ENCODE measurements at regions of chr14 and their contacts with region 1.

Region 1: GRCh38 chr14:73472185-73473114 is 14.1 kb upstream of the NUMB start:
- DNase-seq: peak in 2 of 4 donors; percentile 54 to 71
- ATAC-seq: peak; percentile 90
- H3K4me3 ChIP-seq: no peak overlapping the region
- H3K27ac ChIP-seq: no peak overlapping the region
- H3K4me1 ChIP-seq: peaks cover 1 to 26% of the 10 kb centered on the region in 2 donors
- H3K27me3 ChIP-seq: no peaks in the 10 kb centered on the region
- CTCF ChIP-seq: peak; percentile 44 to 75

Region 2: DNA sequence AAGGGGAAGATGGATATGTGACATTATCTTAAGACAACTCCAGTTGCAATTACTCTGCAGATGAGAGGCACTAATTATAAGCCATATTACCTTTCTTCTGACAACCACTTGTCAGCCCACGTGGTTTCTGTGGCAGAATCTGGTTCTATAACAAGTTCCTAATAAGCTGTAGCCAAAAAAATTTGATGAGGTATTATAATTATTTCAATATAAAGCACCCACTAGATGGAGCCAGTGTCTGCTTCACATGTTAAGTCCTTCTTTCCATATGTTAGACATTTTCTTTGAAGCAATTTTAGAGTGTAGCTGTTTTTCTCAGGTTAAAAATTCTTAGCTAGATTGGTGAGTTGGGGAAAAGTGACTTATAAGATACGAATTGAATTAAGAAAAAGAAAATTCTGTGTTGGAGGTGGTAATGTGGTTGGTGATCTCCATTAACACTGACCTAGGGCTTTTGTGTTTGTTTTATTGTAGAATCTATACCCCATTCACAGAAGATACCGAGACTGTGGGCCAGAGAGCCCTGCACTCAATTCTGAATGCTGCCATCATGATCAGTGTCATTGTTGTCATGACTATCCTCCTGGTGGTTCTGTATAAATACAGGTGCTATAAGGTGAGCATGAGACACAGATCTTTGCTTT is 299.2 kb before region 1 on chr14:
- intact Hi-C with region 1: loop called in 1 of 2 experiments (anchors 10 kb)
- DNase-seq: peak in 2 of 4 donors; percentile 34 to 66
- ATAC-seq: peak; percentile 69
- H3K4me3 ChIP-seq: no peak overlapping the region
- H3K27ac ChIP-seq: no peak overlapping the region
- H3K4me1 ChIP-seq: peaks cover 0 to 16% of the 10 kb centered on the region in 2 donors
- H3K27me3 ChIP-seq: no peaks in the 10 kb centered on the region
- CTCF ChIP-seq: peak in 1 of 2 donors; percentile 46

Region 3: GRCh38 chr14:73295198-73295796 is 177.2 kb before region 1 on chr14:
- intact Hi-C with region 1: loop called in 1 of 2 experiments (anchors 5 kb)
- DNase-seq: peak in 2 of 4 donors; percentile 32 to 45
- ATAC-seq: peak; percentile 71
- H3K4me3 ChIP-seq: no peak overlapping the region
- H3K27ac ChIP-seq: no peak overlapping the region
- H3K4me1 ChIP-seq: no peaks in the 10 kb centered on the region
- H3K27me3 ChIP-seq: no peaks in the 10 kb centered on the region
- CTCF ChIP-seq: peak; percentile 58 to 74

Region 4: GRCh38 chr14:73426877-73427276 is 45.6 kb before region 1 on chr14:
- intact Hi-C with region 1: no loop called
- DNase-seq: no peak
- ATAC-seq: peak; percentile 47
- H3K4me3 ChIP-seq: no peak overlapping the region
- H3K27ac ChIP-seq: peak overlapping the region; percentile 67 to 74
- H3K4me1 ChIP-seq: peaks cover 16 to 67% of the 10 kb centered on the region in 2 donors
- H3K27me3 ChIP-seq: no peaks in the 10 kb centered on the region
- CTCF ChIP-seq: no peak

Region 5: GRCh38 chr14:74217672-74218448 is 745.4 kb after region 1 on chr14:
- intact Hi-C with region 1: no loop called
- DNase-seq: peak in 3 of 4 donors; percentile 60 to 94 (median 73)
- ATAC-seq: peak; percentile 98
- H3K4me3 ChIP-seq: peak overlapping the region in 1 of 2 donors; percentile 16
- H3K27ac ChIP-seq: no peak overlapping the region
- H3K4me1 ChIP-seq: peaks cover 0 to 7% of the 10 kb centered on the region in 2 donors
- H3K27me3 ChIP-seq: peaks cover 4 to 49% of the 10 kb centered on the region in 2 donors
- CTCF ChIP-seq: peak; percentile 90 to 95